ENCODE measurements at regions of chr1 and their contacts with region 1.

Region 1: DNA sequence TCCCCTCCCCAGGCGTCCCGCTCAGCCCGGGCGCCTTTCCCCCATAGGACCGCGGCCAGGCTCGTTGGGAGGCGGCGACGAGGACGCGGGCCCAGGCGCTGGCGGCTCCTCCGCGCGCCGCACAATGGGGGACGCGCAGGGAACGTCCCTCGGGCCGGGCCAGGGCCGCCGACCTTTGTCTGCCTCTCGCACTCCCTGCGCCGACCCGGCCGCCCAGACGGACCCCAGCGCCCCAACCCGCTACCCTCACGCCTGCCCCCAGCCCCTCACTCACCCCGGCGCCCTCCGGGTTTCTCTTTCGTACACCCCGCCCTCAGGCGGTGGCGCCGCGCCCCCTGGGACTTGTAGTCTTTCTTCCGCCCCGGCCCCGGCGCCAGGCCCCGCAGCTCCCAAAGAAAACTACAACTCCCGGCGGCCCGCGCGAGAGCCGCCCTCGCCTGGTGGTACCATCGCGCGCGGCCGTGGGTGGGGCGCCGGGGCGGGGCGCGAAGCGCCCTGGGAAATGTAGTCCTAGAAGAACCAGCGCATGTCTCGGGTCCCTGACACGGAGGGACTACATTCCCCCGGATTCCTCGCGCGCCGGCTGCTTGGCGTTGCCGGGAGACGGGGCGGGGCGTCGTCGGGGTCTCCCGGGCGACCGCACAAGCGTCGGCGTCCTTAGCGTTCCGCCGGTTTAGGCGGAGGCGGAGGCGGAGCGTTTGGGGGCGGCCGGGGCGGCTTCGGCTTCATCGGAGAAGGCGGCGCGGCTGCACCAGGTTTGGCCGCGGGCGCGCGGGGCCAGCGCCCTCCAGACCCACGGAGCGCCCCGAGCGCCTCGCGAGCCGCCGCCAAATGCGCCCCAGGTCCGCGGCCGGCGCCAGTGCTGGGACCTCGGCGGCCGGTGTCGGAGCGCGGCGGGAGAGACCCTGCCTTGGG is at the start of gene C1orf159:
- DNase-seq: peak; percentile 96 to 99 (median 98)
- ATAC-seq: peak; percentile 93
- H3K4me3 ChIP-seq: peak within 1 kb of the TSS; percentile 49
- H3K4me3 Mint-ChIP-seq: peak within 1 kb of the TSS; percentile 97
- H3K27ac ChIP-seq: no peak within 1 kb of the TSS
- H3K27ac Mint-ChIP-seq: peak within 1 kb of the TSS; percentile 79
- H3K4me1 ChIP-seq: peaks cover 26% of the 10 kb centered on the region
- H3K4me1 Mint-ChIP-seq: peaks cover 13% of the 10 kb centered on the region
- H3K27me3 ChIP-seq: peaks cover 0 to 1% of the 10 kb centered on the region in 2 experiments
- H3K27me3 Mint-ChIP-seq: no peaks in the 10 kb centered on the region
- CTCF ChIP-seq: no peak
- total RNA-seq, gene C1orf159: 11.1 to 11.3 TPM

Region 2: DNA sequence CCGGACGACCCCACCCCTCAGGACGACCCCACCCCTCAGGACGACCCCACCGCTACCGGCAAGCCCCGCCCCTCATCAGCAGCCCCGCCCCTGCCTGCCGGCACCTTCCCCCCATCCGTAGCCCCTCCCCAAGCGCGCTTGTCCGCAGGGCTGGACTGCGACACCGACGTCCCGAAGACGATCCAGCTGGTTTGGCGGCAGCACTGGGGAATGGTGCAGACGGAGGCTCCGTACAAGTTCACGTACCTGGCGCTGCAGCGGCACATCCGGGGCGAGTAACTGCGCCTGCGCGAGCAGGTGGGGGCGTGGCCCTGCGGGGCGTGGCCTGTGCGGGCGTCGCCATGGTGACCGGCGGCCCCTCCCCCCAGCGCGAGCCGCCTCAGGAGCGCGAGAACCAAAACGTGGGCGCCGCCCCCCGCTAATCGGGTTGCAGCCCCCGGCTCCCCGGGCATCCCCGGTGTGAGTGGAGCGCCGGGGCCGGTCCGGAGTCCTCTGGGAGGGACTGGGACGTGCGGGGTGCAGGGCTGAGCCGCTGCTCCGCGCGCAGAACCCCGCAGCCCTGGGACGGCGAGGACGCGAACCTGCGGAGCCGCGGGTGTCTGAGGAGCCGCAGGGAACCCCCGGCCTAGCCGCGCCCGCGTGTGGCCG is 46.9 kb before region 1 on chr1:
- CTCF ChIA-PET with region 1: no interaction called
- POLR2A ChIA-PET with region 1: no interaction called
- intact Hi-C with region 1: loop called (anchors 1 to 2 kb)
- DNase-seq: peak; percentile 86 to 97 (median 92)
- ATAC-seq: peak; percentile 69
- H3K4me3 ChIP-seq: peak overlapping the region; percentile 61
- H3K4me3 Mint-ChIP-seq: peak overlapping the region; percentile 87
- H3K27ac ChIP-seq: peak overlapping the region in 1 of 2 donors; percentile 41
- H3K27ac Mint-ChIP-seq: peak overlapping the region; percentile 78
- H3K4me1 ChIP-seq: peaks cover 22% of the 10 kb centered on the region
- H3K4me1 Mint-ChIP-seq: no peaks in the 10 kb centered on the region
- H3K27me3 ChIP-seq: peaks cover 9 to 11% of the 10 kb centered on the region in 2 experiments
- H3K27me3 Mint-ChIP-seq: peaks cover under 1% of the 10 kb centered on the region
- CTCF ChIP-seq: no peak

Region 3: DNA sequence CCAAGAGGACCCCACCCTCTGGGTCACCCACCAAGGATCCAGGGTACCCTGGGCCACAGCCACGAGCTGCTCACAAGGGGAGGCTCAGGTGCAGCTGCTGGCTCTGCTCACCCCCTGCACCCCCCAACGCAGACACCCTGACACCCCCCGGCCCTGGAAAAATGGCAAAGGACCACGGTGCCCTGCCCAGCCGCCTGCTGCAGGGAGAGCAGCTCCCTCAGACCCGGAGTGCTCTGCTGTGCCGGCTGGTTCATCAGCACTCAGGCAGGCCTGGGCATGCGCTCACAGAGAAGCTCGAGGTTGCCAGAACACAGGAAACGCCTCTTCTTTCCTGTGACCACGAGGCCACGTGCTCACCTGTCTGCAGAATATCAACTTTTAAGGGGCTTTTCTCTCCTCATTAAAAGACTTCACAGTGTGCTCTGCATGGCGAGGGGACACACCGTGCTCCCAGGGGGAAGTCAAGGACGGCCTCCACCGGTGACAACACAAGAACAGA is 134.8 kb after region 1 on chr1:
- CTCF ChIA-PET with region 1: no interaction called
- POLR2A ChIA-PET with region 1: no interaction called
- intact Hi-C with region 1: loop called in 1 of 2 experiments (anchors 5 kb)
- DNase-seq: peak in 13 of 14 experiments; percentile 40 to 87 (median 66)
- ATAC-seq: no peak
- H3K4me3 ChIP-seq: peak overlapping the region; percentile 22
- H3K4me3 Mint-ChIP-seq: no peak overlapping the region
- H3K27ac ChIP-seq: peak overlapping the region; percentile 59 to 70
- H3K27ac Mint-ChIP-seq: no peak overlapping the region
- H3K4me1 ChIP-seq: peaks cover 24% of the 10 kb centered on the region
- H3K4me1 Mint-ChIP-seq: no peaks in the 10 kb centered on the region
- H3K27me3 ChIP-seq: peaks cover 4 to 11% of the 10 kb centered on the region in 2 experiments
- H3K27me3 Mint-ChIP-seq: no peaks in the 10 kb centered on the region
- CTCF ChIP-seq: no peak

Region 4: DNA sequence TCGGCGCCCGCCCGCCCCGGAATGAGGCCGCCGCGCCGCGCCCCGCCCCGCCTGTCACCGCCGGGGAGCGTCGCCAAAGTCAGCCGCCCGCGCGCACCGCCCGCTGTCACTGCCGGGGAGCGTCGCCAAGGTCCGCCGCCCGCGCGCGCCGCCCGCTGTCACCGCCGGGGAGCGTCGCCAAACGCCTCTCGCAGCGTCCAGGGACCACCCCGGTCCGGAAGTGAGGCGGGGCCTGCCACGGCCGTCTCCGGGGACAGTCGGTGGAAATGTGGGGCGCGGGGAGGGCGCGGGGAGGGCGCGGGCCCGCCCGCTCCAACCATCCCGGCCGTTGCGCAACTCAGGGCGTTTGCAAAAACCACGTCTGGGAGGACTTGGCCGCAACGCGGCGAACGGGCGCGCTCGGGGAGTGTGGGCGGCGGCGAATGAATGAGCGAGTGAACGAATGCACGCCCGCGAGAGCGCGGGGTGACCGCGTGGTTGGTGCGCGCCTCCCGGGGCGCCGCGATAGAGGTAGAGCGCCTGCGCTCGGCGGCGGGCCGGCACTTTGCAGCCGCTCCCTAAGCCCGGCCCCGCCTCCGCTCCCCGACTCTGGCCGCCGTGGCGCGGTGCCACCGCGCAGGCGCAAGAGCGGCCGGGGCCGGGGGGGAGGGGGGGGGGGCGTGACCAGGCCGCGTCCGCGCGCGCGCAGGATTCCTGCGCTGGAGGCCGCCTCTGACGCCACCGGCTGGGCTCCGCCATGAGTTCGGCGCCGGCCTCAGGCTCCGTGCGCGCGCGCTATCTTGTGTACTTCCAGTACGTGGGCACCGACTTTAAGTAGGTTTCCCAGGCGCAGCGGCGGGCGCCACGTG is 192.1 kb after region 1 on chr1 and contains the starts of genes ACAP3 and PUSL1:
- CTCF ChIA-PET with region 1: no interaction called
- POLR2A ChIA-PET with region 1: no interaction called
- intact Hi-C with region 1: loop called (anchors 5 kb)
- DNase-seq: peak; percentile 77 to 96 (median 86)
- ATAC-seq: peak; percentile 74
- H3K4me3 ChIP-seq: peak within 1 kb of the TSS; percentile 70
- H3K4me3 Mint-ChIP-seq: peak within 1 kb of the TSS; percentile 93
- H3K27ac ChIP-seq: peak within 1 kb of the TSS; percentile 76 to 88
- H3K27ac Mint-ChIP-seq: peak within 1 kb of the TSS; percentile 87
- H3K4me1 ChIP-seq: peaks cover 46% of the 10 kb centered on the region
- H3K4me1 Mint-ChIP-seq: peaks cover 25% of the 10 kb centered on the region
- H3K27me3 ChIP-seq: no peaks in the 10 kb centered on the region
- H3K27me3 Mint-ChIP-seq: no peaks in the 10 kb centered on the region
- CTCF ChIP-seq: no peak
- total RNA-seq, gene ACAP3: 45.3 to 46.4 TPM
- total RNA-seq, gene PUSL1: 18.1 to 19.2 TPM

Region 5: DNA sequence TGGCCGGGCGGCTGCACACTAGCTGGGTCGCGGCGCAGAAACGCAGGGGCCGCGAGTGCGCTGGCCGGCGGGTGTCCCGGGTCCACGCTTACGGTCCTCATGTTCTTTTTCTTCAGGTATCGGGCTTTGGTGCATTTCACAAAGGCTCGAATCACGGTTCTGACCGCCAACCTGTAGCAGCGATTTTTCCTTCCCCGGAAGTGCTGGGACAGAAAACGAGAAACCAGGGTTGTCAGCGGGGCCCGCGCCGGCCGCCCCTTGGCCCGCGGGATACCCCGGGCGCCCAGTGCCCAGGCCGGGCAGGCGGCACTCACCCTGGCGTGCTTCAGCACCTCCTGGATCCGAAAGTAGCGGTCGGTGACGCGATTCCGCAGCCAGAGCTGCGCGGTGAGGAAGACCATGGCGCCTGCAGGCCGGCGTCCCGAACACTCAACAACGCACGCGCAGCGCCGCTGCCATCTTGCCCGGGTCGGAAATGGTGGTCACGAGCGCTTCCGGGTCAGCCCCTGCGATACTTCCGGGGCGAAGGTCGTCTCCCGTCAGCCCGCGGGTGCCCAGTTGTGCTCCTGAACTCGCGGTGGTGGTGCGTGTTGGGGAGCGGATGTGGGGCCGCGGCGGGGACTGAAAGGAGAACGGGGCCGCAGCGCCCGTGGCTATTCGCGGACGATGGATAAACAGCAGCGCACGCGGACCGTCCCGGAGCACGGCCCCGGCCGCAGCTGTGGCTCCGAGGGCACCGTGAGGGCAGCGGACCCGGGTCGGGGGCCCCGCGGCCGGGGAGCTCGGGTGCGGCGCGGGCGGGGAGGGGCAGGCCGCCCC is 291.0 kb after region 1 on chr1 and contains the start of gene MRPL20:
- CTCF ChIA-PET with region 1: no interaction called
- POLR2A ChIA-PET with region 1: no interaction called
- intact Hi-C with region 1: loop called in 1 of 2 experiments (anchors 2 kb)
- DNase-seq: peak; percentile 93 to 99 (median 95)
- ATAC-seq: peak; percentile 94
- H3K4me3 ChIP-seq: peak within 1 kb of the TSS; percentile 92
- H3K4me3 Mint-ChIP-seq: peak within 1 kb of the TSS; percentile 94
- H3K27ac ChIP-seq: peak within 1 kb of the TSS; percentile 80 to 88
- H3K27ac Mint-ChIP-seq: peak within 1 kb of the TSS; percentile 91
- H3K4me1 ChIP-seq: peaks cover 44% of the 10 kb centered on the region
- H3K4me1 Mint-ChIP-seq: peaks cover 34% of the 10 kb centered on the region
- H3K27me3 ChIP-seq: no peaks in the 10 kb centered on the region
- H3K27me3 Mint-ChIP-seq: no peaks in the 10 kb centered on the region
- CTCF ChIP-seq: no peak
- total RNA-seq, gene MRPL20: 99.9 to 103 TPM